Naive thymus-derived CD4-positive, alpha-beta T cell (primary cell): ENCODE measurements at regions of chr12 and their contacts with region 1.

Region 1: DNA sequence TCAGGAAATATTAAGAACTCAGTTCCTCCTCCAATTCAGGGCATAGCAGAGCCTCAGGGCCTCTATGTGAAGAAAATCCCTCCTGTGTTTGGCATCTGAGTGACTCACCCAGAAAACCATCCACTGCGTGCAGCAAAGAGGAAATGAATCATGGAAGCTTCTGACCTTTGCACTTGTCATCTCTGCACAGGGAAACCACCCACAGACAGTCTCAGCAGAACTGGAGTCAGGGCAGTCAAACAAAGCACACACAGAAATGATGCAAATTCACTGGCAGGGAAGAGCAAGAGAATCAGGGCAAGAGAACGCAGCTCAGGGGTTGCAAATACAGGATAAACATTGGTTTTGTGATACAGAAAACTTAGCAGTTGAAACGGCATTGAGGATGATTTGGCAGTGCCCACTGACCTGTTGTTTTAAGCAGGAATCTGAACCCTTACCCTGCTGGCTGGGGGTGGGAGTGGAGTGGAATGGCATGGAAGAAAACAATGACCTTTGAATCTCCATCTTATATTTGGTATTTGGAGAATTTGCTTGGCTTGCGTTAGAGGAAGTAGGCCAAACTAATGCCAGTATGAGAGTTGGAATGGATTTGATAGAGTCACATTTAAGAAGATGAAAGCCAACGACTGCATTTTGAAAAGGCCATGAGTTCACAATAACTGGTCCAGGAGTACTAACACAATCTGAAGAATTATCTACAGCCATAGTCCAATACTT is 53.5 kb downstream of the PHLDA1 start:
- DNase-seq: peak in 8 of 9 donors; percentile 4 to 80 (median 38)
- ATAC-seq: peak; percentile 94
- H3K4me3 ChIP-seq: no peak overlapping the region
- H3K4me3 Mint-ChIP-seq: peak overlapping the region in 7 of 10 donors; percentile 24 to 64 (median 51)
- H3K27ac ChIP-seq: peak overlapping the region; percentile 21
- H3K27ac Mint-ChIP-seq: peak overlapping the region; percentile 41 to 90 (median 74)
- H3K4me1 ChIP-seq: peaks cover 15 to 26% of the 10 kb centered on the region in 2 donors
- H3K4me1 Mint-ChIP-seq: peaks cover 21 to 58% (median 26%) of the 10 kb centered on the region in 7 donors
- H3K27me3 ChIP-seq: no peaks in the 10 kb centered on the region
- H3K27me3 Mint-ChIP-seq: no peaks in the 10 kb centered on the region

Region 2: DNA sequence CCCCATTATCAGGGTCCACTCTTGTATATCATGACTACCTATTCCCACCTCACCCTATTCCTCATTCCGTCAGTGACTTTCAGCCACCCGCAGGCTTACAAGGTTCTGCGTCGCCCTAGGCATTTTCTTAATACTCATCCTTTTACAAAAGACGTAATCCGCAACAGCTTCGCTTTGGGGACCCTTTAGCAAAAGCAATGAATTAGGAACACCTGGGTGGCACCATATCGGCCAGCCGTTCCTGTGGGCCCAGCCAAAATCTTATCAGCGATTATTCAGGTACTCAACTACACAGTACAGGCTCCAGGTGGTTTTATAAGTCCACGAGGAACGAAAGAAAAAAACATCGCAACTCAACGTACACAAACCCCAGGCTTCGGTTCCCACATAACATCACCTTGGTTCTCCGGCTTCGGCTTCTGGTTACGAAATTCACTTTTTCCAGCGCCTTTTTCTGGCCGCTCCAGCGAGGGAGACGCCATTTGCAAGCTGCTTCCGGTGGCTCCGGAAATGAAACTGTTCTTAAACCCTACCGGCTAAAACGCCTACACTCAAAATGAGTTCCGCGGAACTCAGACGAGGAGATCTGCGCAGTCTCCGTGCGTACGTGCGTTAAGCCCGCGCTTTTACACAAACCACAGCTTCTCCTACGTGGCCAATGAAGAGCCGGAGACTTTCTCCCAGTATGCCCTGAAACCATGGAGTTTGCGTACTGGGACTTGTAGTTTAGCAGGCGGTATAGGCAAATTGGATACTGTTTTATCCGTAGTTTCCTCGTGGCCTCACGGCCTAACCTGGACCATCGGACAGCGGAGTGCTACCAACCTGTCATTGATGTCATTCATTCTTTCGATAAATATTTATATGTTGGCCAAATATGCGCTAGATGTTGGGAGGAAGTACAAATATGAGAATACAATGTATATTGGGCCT is 466.7 kb before region 1 on chr12 and contains the start of gene KRR1:
- CTCF ChIA-PET with region 1: no interaction called
- POLR2A ChIA-PET with region 1: no interaction called
- intact Hi-C with region 1: loop called (anchors 1 kb)
- DNase-seq: peak; percentile 60 to 93 (median 90)
- ATAC-seq: peak; percentile 98
- H3K4me3 ChIP-seq: peak within 1 kb of the TSS; percentile 90
- H3K4me3 Mint-ChIP-seq: peak within 1 kb of the TSS; percentile 96 to 100 (median 99)
- H3K27ac ChIP-seq: peak within 1 kb of the TSS; percentile 89
- H3K27ac Mint-ChIP-seq: peak within 1 kb of the TSS; percentile 96 to 100 (median 99)
- H3K4me1 ChIP-seq: peaks cover 13% of the 10 kb centered on the region in 2 donors
- H3K4me1 Mint-ChIP-seq: peaks cover 15 to 47% (median 38%) of the 10 kb centered on the region in 7 donors
- H3K27me3 ChIP-seq: no peaks in the 10 kb centered on the region
- H3K27me3 Mint-ChIP-seq: no peaks in the 10 kb centered on the region
- total RNA-seq, gene KRR1: 69.3 to 120 (median 74.3) TPM

Region 3: DNA sequence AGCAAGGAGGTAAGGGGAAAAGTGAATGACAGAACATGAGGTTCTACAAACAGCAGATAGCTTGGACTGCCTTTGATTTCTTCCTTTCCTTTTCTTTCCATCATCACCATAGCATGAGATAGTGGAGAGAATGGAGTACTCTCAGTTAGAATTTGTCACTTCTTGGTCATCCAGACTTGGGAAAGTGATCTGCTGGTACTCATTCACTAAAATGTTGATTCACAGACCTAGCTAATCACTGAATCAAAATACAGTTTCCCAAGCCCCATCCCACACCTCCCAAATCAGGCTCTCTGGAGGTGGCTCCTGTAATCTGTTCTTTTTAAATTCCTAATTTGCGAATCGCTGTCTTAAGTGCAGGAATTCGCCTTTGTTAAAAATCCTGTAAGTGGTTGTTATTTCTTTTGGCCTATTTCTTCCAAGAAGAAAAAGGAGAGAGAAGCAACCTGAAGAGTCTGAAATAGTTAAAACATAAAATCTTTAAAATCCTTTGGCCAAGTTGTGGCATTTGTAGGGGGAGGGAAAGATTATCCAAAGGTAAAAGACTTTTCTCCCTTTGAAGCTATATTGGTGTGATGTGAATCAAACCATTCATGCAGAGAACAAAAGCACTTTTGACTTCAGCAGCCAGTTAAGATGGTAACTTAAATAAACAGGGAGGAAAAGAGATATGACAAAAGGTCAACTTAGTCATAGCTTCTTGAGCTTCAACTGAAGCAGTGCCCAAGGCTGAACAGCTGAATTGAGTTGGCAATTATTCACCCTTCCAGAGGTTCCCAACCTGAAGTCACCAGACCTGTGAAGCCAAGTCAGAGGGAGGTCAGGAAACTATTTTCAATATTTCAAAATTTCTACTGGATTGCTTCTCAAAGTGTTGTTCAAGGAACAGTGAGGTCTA is 211.6 kb before region 1 on chr12:
- CTCF ChIA-PET with region 1: no interaction called
- POLR2A ChIA-PET with region 1: no interaction called
- intact Hi-C with region 1: no loop called
- DNase-seq: no peak
- ATAC-seq: no peak
- H3K4me3 ChIP-seq: no peak overlapping the region
- H3K4me3 Mint-ChIP-seq: no peak overlapping the region
- H3K27ac ChIP-seq: no peak overlapping the region
- H3K27ac Mint-ChIP-seq: no peak overlapping the region
- H3K4me1 ChIP-seq: no peaks in the 10 kb centered on the region
- H3K4me1 Mint-ChIP-seq: no peaks in the 10 kb centered on the region
- H3K27me3 ChIP-seq: peaks cover 0 to 3% of the 10 kb centered on the region in 2 donors
- H3K27me3 Mint-ChIP-seq: peaks cover 0 to 41% (median 8%) of the 10 kb centered on the region in 5 donors

Region 4: DNA sequence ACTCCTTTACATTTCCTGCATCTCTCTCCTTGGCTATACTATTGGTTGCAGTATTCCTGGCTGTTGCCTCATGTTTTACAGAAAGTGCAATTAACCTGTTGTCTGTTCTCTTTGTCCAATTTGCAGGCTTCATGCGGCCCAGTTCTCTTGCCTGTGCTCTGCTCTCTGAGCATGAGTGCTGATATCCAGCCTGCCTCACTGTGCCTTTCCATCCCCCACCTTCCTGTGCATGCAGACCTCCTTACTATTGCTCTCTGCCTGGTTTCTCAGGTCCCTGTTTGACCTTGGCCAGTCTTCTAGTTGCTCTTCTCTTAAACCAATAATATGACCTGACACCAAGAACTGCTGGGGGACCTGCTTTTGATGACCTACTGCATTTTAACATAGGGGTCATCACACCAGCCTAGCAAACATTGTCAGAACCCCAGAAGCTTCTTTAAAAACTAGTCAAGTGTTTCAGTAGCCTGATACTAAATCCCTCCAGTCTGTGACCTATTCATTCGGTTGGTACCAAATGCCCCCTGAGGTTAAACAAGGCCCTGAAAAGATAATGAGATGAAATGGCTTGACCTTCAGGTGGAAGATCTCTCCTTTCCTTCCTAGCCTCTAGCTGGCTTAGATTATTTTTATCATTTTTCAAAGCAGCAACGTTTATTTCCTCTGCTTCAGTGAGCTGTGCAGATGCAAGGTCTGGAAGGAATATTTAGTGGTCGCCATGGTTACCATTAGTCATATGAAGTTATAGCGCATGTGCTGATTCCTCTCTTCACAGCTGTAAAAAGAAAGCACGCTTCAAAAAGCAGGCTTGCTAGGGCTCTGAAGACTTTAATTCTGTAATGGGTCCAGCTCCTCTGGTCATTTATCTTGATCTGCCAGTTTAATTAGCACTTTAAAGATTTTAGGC is 163.0 kb before region 1 on chr12:
- CTCF ChIA-PET with region 1: no interaction called
- POLR2A ChIA-PET with region 1: no interaction called
- intact Hi-C with region 1: loop called in 1 of 2 experiments (anchors 5 kb)
- DNase-seq: peak in 1 of 9 donors; percentile 5
- ATAC-seq: peak; percentile 34
- H3K4me3 ChIP-seq: no peak overlapping the region
- H3K4me3 Mint-ChIP-seq: no peak overlapping the region
- H3K27ac ChIP-seq: no peak overlapping the region
- H3K27ac Mint-ChIP-seq: no peak overlapping the region
- H3K4me1 ChIP-seq: peaks cover 0 to 7% of the 10 kb centered on the region in 2 donors
- H3K4me1 Mint-ChIP-seq: peaks cover 0 to 18% (median 0%) of the 10 kb centered on the region in 7 donors
- H3K27me3 ChIP-seq: no peaks in the 10 kb centered on the region
- H3K27me3 Mint-ChIP-seq: peaks cover 0 to 7% (median 5%) of the 10 kb centered on the region in 5 donors

Region 5: DNA sequence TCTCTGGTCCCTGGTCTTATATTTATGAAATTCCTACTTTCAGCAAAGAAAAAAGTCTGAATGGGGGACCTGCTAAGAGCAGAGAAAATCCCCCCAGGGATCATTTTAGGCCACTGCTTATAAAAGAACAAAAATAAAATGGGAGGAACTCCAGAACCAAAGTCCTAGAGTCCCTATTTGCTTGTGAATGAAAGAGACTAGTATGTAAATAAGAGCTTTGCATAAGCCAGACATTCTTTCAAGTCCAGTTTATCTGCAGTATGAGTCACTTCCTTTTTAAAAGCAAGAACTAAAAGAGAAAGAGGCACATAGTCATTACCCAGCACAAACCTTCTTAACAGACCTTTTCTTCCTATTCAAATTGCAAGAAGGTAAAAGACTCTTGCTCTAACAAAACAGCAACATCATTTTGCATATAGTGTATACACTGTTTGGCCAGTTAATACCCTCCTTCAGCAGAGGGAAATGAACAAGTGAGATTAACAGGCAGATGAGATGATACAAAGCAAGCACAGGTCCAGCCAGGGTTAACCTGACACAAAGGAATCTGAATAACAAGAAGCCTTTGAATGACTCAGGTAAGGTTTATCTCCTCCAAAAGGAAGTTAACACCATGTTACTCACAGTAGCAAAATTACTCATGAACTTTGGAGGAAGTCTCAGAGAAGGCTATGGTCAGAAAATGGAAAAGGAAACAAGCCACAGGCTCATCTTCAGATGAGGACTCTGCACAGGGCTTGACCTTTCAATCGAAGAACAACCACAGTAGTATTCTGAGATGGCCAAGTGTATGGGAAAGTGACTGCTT is 33.8 kb before region 1 on chr12:
- CTCF ChIA-PET with region 1: no interaction called
- POLR2A ChIA-PET with region 1: no interaction called
- intact Hi-C with region 1: loop called (anchors 1 kb)
- DNase-seq: peak in 1 of 9 donors; percentile 35
- ATAC-seq: peak; percentile 87
- H3K4me3 ChIP-seq: no peak overlapping the region
- H3K4me3 Mint-ChIP-seq: peak overlapping the region in 2 of 10 donors; percentile 61 to 83
- H3K27ac ChIP-seq: no peak overlapping the region
- H3K27ac Mint-ChIP-seq: peak overlapping the region in 5 of 9 donors; percentile 40 to 97 (median 74)
- H3K4me1 ChIP-seq: peaks cover 0 to 16% of the 10 kb centered on the region in 2 donors
- H3K4me1 Mint-ChIP-seq: peaks cover 7 to 28% (median 11%) of the 10 kb centered on the region in 7 donors
- H3K27me3 ChIP-seq: no peaks in the 10 kb centered on the region
- H3K27me3 Mint-ChIP-seq: no peaks in the 10 kb centered on the region

Region 6: DNA sequence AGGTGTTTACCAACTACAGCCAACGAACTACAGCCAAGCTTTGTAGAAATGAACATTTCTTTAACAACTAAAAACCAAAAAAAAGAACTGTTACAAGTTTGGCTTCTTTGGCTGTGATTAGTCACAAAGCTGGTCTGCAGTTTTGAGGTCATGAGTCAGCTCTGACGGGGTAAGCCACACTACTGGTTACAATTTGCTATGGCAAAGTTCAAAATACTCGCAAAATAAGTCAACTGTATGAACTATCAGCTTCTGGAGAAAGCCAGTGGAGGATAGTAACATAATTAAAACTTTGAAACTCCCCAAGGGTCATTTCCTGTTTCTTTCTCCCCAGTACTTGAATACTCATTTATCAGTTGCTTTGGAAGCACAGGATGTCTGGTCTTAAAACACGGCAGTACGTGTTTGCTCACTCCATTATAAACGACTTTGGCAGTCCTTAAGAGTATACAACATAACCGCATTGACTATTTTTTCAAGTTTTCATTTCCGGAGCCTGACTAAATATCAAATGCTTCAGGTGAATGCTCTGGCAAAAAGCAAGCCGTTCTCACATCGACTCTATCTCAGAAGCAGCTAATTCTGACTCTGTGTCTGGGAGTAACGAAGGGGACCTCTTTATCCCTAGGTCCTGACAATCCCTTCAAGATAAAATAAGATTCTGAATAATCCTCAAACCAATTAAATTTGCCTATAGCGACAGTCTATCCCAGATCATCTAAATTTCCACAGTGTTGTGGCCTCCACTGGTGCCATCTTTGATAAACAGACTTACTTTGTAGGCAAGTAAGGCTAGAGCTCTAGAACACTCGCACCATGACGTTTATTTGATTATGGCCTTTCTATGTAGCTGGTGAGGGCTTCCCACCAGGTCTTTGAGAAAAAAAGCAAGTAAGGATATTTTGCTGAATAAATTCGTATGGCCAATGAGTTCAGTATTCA is 42.9 kb after region 1 on chr12:
- CTCF ChIA-PET with region 1: no interaction called
- POLR2A ChIA-PET with region 1: no interaction called
- intact Hi-C with region 1: loop called (anchors 1 kb)
- DNase-seq: peak in 8 of 9 donors; percentile 32 to 65 (median 54)
- ATAC-seq: peak; percentile 87
- H3K4me3 ChIP-seq: peak overlapping the region; percentile 21
- H3K4me3 Mint-ChIP-seq: peak overlapping the region in 9 of 10 donors; percentile 33 to 74 (median 67)
- H3K27ac ChIP-seq: peak overlapping the region; percentile 43
- H3K27ac Mint-ChIP-seq: peak overlapping the region; percentile 84 to 98 (median 90)
- H3K4me1 ChIP-seq: peaks cover 15 to 17% of the 10 kb centered on the region in 2 donors
- H3K4me1 Mint-ChIP-seq: peaks cover 6 to 56% (median 21%) of the 10 kb centered on the region in 7 donors
- H3K27me3 ChIP-seq: no peaks in the 10 kb centered on the region
- H3K27me3 Mint-ChIP-seq: no peaks in the 10 kb centered on the region